Heart left ventricle (tissue), 16 donors: ENCODE measurements at regions of chr17 and their contacts with region 1.

Region 1: DNA sequence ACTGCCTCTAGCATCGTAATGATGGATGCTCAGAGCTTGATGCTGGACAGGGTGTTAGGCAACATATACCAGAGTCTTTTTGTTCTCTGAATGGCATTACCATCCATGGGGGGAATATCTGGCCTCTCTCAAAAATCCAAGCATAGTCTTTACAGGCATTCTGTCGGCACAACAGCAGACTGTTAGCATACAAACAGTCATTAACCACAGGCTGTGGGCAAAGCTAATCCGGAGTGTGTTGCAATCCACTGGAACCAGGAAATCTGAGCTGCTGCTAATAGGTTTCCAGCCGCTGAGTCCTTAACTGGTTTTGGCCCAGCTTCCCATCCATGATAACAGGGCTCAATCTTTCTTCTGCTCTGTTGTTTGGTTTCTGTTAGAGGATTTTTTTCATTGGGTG is 371.9 kb downstream of the HS3ST3B1 start:
- DNase-seq: no peak
- ATAC-seq: no peak
- H3K4me3 ChIP-seq: no peak overlapping the region
- H3K27ac ChIP-seq: no peak overlapping the region
- H3K4me1 ChIP-seq: no peaks in the 10 kb centered on the region
- H3K27me3 ChIP-seq: peaks cover 0 to 7% (median 0%) of the 10 kb centered on the region in 9 donors
- CTCF ChIP-seq: no peak
- POLR2A ChIP-seq: no peak

Region 2: DNA sequence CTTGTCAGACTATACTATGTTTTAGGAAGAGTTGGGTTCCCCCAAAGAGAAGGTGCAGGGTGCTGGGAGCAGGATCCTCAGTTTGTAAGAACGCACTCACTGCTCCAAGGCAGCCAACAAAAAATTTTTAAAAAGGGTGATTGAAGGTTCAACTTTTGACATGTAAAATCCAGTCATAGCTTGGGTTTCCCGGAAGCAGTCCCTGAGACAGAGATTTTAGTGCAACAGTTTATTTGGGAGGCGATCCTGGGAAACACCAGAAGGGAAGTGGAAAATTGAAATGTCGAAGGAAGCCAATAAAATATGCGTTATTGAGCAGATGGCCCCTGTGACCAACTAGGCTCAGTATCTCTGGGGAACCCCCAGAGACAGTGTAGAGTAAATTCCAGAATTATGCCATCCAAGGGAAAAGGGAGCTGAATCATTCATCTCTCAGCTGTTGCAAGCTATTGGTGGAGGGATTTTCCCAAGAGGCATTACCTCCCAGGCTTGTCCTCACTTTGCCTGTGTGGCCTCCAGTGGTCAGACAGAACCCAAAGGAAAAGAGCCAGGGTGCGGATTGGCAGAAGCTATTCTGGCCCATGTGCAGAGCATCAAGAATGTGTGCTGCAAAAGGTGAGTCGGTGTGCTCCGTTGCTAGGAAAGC is 299.1 kb before region 1 on chr17:
- intact Hi-C with region 1: no loop called
- DNase-seq: no peak
- ATAC-seq: no peak
- H3K4me3 ChIP-seq: no peak overlapping the region
- H3K27ac ChIP-seq: no peak overlapping the region
- H3K4me1 ChIP-seq: no peaks in the 10 kb centered on the region
- H3K27me3 ChIP-seq: peaks cover 0 to 8% (median 0%) of the 10 kb centered on the region in 9 donors
- CTCF ChIP-seq: no peak
- POLR2A ChIP-seq: no peak

Region 3: GRCh38 chr17:14605267-14605599 is 67.6 kb before region 1 on chr17:
- intact Hi-C with region 1: loop called in 1 of 10 experiments (anchors 10 kb)
- DNase-seq: peak in 4 of 5 donors; percentile 23 to 55 (median 40)
- ATAC-seq: peak; percentile 51 to 81 (median 68)
- H3K4me3 ChIP-seq: no peak overlapping the region
- H3K27ac ChIP-seq: peak overlapping the region in 1 of 12 donors; percentile 62
- H3K4me1 ChIP-seq: no peaks in the 10 kb centered on the region
- H3K27me3 ChIP-seq: peaks cover 0 to 2% (median 0%) of the 10 kb centered on the region in 9 donors
- CTCF ChIP-seq: no peak
- POLR2A ChIP-seq: no peak

Region 4: GRCh38 chr17:14622615-14623101 is 50.2 kb before region 1 on chr17:
- intact Hi-C with region 1: no loop called
- DNase-seq: no peak
- ATAC-seq: no peak
- H3K4me3 ChIP-seq: no peak overlapping the region
- H3K27ac ChIP-seq: no peak overlapping the region
- H3K4me1 ChIP-seq: no peaks in the 10 kb centered on the region
- H3K27me3 ChIP-seq: no peaks in the 10 kb centered on the region
- CTCF ChIP-seq: no peak
- POLR2A ChIP-seq: no peak